Motor neuron (in vitro differentiated cells): ENCODE measurements at regions of chr7 and their contacts with region 1.

Region 1: GRCh38 chr7:101058355-101058754 is 26.9 kb upstream of the TRIM56 start:
- ATAC-seq: peak in 4 of 8 experiments; percentile 41 to 61 (median 54)
- H3K4me3 ChIP-seq: no peak overlapping the region
- H3K27ac ChIP-seq: no peak overlapping the region
- H3K4me1 ChIP-seq: peaks cover 0 to 2% of the 10 kb centered on the region in 2 donors

Region 2: GRCh38 chr7:100889761-100890634 is 168.4 kb before region 1 on chr7:
- in situ Hi-C with region 1: loop called in 4 of 9 experiments (anchors 5 to 25 kb)
- ATAC-seq: peak; percentile 77 to 89 (median 80)
- H3K4me3 ChIP-seq: peak overlapping the region; percentile 45 to 66 (median 55)
- H3K27ac ChIP-seq: peak overlapping the region; percentile 78 to 94
- H3K4me1 ChIP-seq: peaks cover 24 to 27% of the 10 kb centered on the region in 2 donors

Region 3: GRCh38 chr7:100901921-100902332 is 156.4 kb before region 1 on chr7:
- in situ Hi-C with region 1: loop called (anchors 5 to 25 kb)
- ATAC-seq: no peak
- H3K4me3 ChIP-seq: no peak overlapping the region
- H3K27ac ChIP-seq: no peak overlapping the region
- H3K4me1 ChIP-seq: no peaks in the 10 kb centered on the region

Region 4: GRCh38 chr7:100914879-100915447 is 143.4 kb before region 1 on chr7:
- in situ Hi-C with region 1: loop called in 2 of 9 experiments (anchors 25 kb)
- ATAC-seq: no peak
- H3K4me3 ChIP-seq: no peak overlapping the region
- H3K27ac ChIP-seq: no peak overlapping the region
- H3K4me1 ChIP-seq: peaks cover 0 to 6% of the 10 kb centered on the region in 2 donors

Region 5: GRCh38 chr7:100965723-100966541 is 92.4 kb before region 1 on chr7:
- in situ Hi-C with region 1: loop called in 2 of 9 experiments (anchors 10 kb)
- ATAC-seq: peak; percentile 86 to 95 (median 89)
- H3K4me3 ChIP-seq: peak overlapping the region; percentile 6 to 26 (median 18)
- H3K27ac ChIP-seq: peak overlapping the region in 1 of 2 donors; percentile 8
- H3K4me1 ChIP-seq: peaks cover 0 to 7% of the 10 kb centered on the region in 2 donors